IMR-90 (cell line): ENCODE measurements at regions of chr1 and their contacts with region 1.

Region 1: GRCh38 chr1:99685516-99686180 is 39.7 kb downstream of the PALMD start:
- DNase-seq: peak; percentile 91
- ATAC-seq: peak; percentile 67
- H3K4me3 ChIP-seq: no peak overlapping the region
- H3K27ac ChIP-seq: peak overlapping the region; percentile 49; the same call in 1 of the 2 replicates
- H3K4me1 ChIP-seq: peaks cover 10% of the 10 kb centered on the region
- H3K27me3 ChIP-seq: no peaks in the 10 kb centered on the region
- CTCF ChIP-seq: peak; percentile 50
- POLR2A ChIP-seq: no peak
- RAD21 ChIP-seq: peak; percentile 41

Region 2: DNA sequence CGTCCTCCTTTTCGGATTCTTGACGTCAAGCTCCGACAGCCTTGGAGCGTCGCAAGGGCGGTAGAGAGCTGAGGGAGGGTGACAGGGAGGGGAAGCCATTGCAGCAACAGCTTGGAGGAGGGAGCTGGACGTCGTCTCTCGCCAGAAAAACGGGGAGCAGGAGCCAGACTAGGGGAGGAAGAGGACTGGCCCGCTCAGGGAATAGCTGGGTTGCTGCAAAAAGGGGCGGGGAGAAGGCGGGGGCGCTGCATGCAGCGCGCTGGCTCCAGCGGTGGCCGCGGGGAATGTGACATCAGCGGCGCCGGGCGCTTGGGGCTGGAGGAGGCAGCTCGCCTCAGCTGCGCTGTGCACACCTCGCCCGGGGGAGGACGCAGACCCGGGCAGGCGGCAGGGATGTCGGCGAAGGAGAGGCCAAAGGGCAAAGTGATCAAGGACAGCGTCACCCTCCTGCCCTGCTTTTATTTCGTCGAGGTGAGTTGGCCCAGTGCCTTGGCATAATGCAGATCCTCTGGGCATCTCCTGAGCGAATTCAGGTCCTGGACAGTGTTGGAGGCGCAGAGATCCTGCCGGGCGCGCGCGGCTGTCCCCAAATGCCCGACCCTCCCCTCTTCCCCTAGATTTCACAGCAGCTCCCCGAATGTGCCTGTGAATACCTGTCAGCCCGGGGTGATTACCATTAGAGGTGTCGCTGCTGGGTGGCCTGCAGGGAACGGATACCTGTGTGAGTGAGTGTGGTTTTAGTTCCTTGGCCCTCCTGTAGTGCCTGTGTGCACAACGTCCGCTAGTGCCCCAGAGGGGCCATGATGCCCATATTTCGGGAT is 421.2 kb before region 1 on chr1 and contains the start of gene PLPPR4:
- CTCF ChIA-PET with region 1: no interaction called
- POLR2A ChIA-PET with region 1: no interaction called
- dilution Hi-C with region 1: no loop called
- in situ Hi-C with region 1: no loop called
- intact Hi-C with region 1: loop called (anchors 5 kb)
- DNase-seq: peak; percentile 43
- ATAC-seq: peak; percentile 83
- H3K4me3 ChIP-seq: peak within 1 kb of the TSS; percentile 57
- H3K27ac ChIP-seq: 0 out of 2 replicates have a peak within 1 kb of the TSS, but pooled peaks have one; percentile 14
- H3K4me1 ChIP-seq: peaks cover 14% of the 10 kb centered on the region
- H3K27me3 ChIP-seq: no peaks in the 10 kb centered on the region
- CTCF ChIP-seq: no peak
- POLR2A ChIP-seq: 0 out of 2 replicates have a peak, but pooled peaks have one; percentile 35
- RAD21 ChIP-seq: no peak
- total RNA-seq, gene PLPPR4: 6.4 and 7.0 TPM in 2 replicates

Region 3: DNA sequence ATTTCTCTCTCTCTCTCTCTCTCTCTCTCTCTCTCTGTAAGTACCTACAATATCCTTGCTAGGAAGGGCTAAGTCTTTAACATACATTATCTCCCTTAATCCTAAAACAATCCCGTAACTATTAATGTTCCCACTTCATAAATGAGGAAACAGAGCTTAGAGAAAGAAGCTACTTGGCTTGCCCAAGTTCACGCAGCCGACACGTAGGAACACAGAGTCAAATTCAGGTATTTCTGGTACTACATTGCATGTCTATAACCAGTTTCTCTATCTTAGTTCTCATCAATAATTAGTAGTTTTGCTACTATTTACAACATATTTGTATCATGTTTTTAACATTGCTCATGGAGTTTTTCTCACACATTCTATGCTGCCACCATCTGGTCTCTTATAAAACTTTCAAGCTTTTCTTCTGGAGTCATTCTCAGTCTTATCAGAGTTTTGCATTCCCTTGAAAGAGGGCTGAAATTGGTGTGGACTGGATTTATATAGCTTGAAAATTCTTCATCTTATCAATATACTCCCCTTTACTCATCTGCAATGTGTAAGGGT is 158.6 kb before region 1 on chr1:
- CTCF ChIA-PET with region 1: interaction called, 9 read pairs
- POLR2A ChIA-PET with region 1: no interaction called
- dilution Hi-C with region 1: no loop called
- in situ Hi-C with region 1: no loop called
- intact Hi-C with region 1: loop called (anchors 5 kb)
- DNase-seq: peak; percentile 20
- ATAC-seq: no peak; the same call in 1 of the 2 replicates
- H3K4me3 ChIP-seq: no peak overlapping the region
- H3K27ac ChIP-seq: no peak overlapping the region
- H3K4me1 ChIP-seq: no peaks in the 10 kb centered on the region
- H3K27me3 ChIP-seq: no peaks in the 10 kb centered on the region
- CTCF ChIP-seq: peak; percentile 43
- POLR2A ChIP-seq: no peak
- RAD21 ChIP-seq: peak; percentile 36

Region 4: DNA sequence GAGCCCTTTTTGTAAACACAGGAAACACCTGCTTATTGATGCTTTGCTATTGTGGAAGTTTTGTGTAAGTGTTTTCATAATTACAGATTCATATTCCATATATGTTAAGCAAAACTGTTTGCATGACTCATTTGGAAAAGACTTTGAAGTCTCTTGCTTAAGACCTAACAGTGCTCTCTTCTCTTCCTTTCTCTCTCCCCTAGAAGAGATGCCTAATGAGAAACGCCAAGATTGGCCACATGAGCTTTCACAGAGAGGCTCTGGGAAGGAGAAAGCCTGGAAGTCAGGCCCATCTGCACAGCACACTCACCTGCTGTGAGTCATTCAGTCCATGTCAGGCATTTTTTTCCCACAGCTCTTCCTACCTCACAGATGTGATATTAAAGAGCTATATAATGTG is 141.3 kb before region 1 on chr1:
- CTCF ChIA-PET with region 1: interaction called, 3 read pairs
- POLR2A ChIA-PET with region 1: no interaction called
- dilution Hi-C with region 1: no loop called
- in situ Hi-C with region 1: no loop called
- intact Hi-C with region 1: loop called (anchors 5 kb)
- DNase-seq: peak; percentile 79
- ATAC-seq: peak; percentile 58
- H3K4me3 ChIP-seq: no peak overlapping the region
- H3K27ac ChIP-seq: no peak overlapping the region
- H3K4me1 ChIP-seq: peaks cover 4% of the 10 kb centered on the region; the same call in 1 of the 2 replicates
- H3K27me3 ChIP-seq: no peaks in the 10 kb centered on the region
- CTCF ChIP-seq: no peak
- POLR2A ChIP-seq: no peak
- RAD21 ChIP-seq: no peak

Region 5: GRCh38 chr1:99599678-99600175 is 85.9 kb before region 1 on chr1:
- CTCF ChIA-PET with region 1: interaction called, 5 read pairs
- POLR2A ChIA-PET with region 1: interaction called, 3 read pairs
- dilution Hi-C with region 1: no loop called
- in situ Hi-C with region 1: no loop called
- intact Hi-C with region 1: loop called (anchors 1 kb)
- DNase-seq: peak; percentile 94
- ATAC-seq: peak; percentile 92
- H3K4me3 ChIP-seq: no peak overlapping the region
- H3K27ac ChIP-seq: peak overlapping the region; percentile 90
- H3K4me1 ChIP-seq: peaks cover 12% of the 10 kb centered on the region
- H3K27me3 ChIP-seq: no peaks in the 10 kb centered on the region
- CTCF ChIP-seq: no peak
- POLR2A ChIP-seq: no peak
- RAD21 ChIP-seq: no peak

Region 6: GRCh38 chr1:100039591-100039990 is 353.9 kb after region 1 on chr1:
- CTCF ChIA-PET with region 1: no interaction called
- POLR2A ChIA-PET with region 1: no interaction called
- dilution Hi-C with region 1: no loop called
- in situ Hi-C with region 1: no loop called
- intact Hi-C with region 1: no loop called
- DNase-seq: no peak
- ATAC-seq: no peak
- H3K4me3 ChIP-seq: peak overlapping the region; percentile 99
- H3K27ac ChIP-seq: no peak overlapping the region
- H3K4me1 ChIP-seq: no peaks in the 10 kb centered on the region
- H3K27me3 ChIP-seq: no peaks in the 10 kb centered on the region
- CTCF ChIP-seq: no peak
- POLR2A ChIP-seq: no peak
- RAD21 ChIP-seq: no peak

Region 7: GRCh38 chr1:100266741-100267140 is 581.1 kb after region 1 on chr1:
- CTCF ChIA-PET with region 1: no interaction called
- POLR2A ChIA-PET with region 1: no interaction called
- dilution Hi-C with region 1: no loop called
- in situ Hi-C with region 1: no loop called
- intact Hi-C with region 1: no loop called
- DNase-seq: peak; percentile 19
- ATAC-seq: peak; percentile 3; the same call in 1 of the 2 replicates
- H3K4me3 ChIP-seq: peak overlapping the region; percentile 66
- H3K27ac ChIP-seq: peak overlapping the region; percentile 78
- H3K4me1 ChIP-seq: peaks cover 2% of the 10 kb centered on the region; the same call in 1 of the 2 replicates
- H3K27me3 ChIP-seq: no peaks in the 10 kb centered on the region
- CTCF ChIP-seq: no peak
- POLR2A ChIP-seq: no peak
- RAD21 ChIP-seq: no peak